Caco-2 (cell line): ENCODE measurements at regions of chr5 and their contacts with region 1.

Region 1: GRCh38 chr5:139458580-139459406 is 3.8 kb downstream of the ECSCR start:
- DNase-seq: no peak
- H3K4me3 ChIP-seq: no peak overlapping the region
- H3K4me3 Mint-ChIP-seq: no peak overlapping the region
- H3K27ac Mint-ChIP-seq: peak overlapping the region; percentile 18
- H3K4me1 ChIP-seq: peaks cover 12% of the 10 kb centered on the region
- H3K4me1 Mint-ChIP-seq: no peaks in the 10 kb centered on the region
- H3K27me3 ChIP-seq: no peaks in the 10 kb centered on the region
- H3K27me3 Mint-ChIP-seq: no peaks in the 10 kb centered on the region
- CTCF ChIP-seq: no peak

Region 2: DNA sequence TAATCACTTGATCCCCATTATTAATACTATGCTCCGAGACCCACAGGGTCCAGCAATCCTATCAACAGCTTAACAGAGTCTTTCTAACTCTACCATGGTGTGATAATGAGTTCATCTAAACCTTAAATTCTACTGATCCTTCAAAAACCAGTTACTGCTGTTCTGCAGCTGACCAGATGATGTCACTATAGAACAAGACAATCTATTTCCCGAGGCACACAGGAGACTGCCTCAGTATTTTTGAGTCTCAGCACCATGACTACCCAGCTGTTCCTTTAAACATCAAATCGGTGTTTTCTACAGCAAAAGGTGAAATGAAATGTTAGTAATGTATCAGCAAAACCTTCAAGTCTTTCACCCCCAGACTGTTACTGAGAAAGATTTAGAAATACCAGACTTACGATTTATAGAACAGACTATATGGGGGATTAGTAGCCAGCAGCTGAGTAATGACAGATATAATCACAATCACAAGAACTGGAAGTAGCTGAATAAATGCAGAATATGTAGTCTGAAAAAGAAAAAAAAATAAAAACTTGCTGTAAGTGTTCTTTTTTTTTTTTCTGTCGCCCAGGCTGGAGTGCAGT is 36.4 kb before region 1 on chr5:
- CTCF ChIA-PET with region 1: no interaction called
- POLR2A ChIA-PET with region 1: no interaction called
- intact Hi-C with region 1: no loop called
- DNase-seq: peak; percentile 47 to 72
- H3K4me3 ChIP-seq: no peak overlapping the region
- H3K4me3 Mint-ChIP-seq: no peak overlapping the region
- H3K27ac Mint-ChIP-seq: no peak overlapping the region
- H3K4me1 ChIP-seq: no peaks in the 10 kb centered on the region
- H3K4me1 Mint-ChIP-seq: peaks cover 6% of the 10 kb centered on the region
- H3K27me3 ChIP-seq: no peaks in the 10 kb centered on the region
- H3K27me3 Mint-ChIP-seq: no peaks in the 10 kb centered on the region
- CTCF ChIP-seq: peak; percentile 77 to 89

Region 3: GRCh38 chr5:139439013-139439903 is 19.5 kb before region 1 on chr5 and contains the start of gene DNAJC18:
- CTCF ChIA-PET with region 1: interaction called, 3 read pairs
- POLR2A ChIA-PET with region 1: interaction called, 4 read pairs
- intact Hi-C with region 1: loop called (anchors 2 kb)
- DNase-seq: peak; percentile 94
- H3K4me3 ChIP-seq: peak within 1 kb of the TSS; percentile 94
- H3K4me3 Mint-ChIP-seq: peak within 1 kb of the TSS; percentile 99
- H3K27ac Mint-ChIP-seq: peak within 1 kb of the TSS; percentile 96
- H3K4me1 ChIP-seq: peaks cover 22% of the 10 kb centered on the region
- H3K4me1 Mint-ChIP-seq: peaks cover 21% of the 10 kb centered on the region
- H3K27me3 ChIP-seq: no peaks in the 10 kb centered on the region
- H3K27me3 Mint-ChIP-seq: no peaks in the 10 kb centered on the region
- CTCF ChIP-seq: no peak
- total RNA-seq, gene DNAJC18: 12.5 and 14.1 TPM in 2 replicates